GM12878 (cell line): ENCODE measurements at regions of chr1 and their contacts with region 1.

Region 1: GRCh38 chr1:6116137-6116536 is 64.0 kb downstream of the CHD5 start:
- DNase-seq: no peak
- ATAC-seq: no peak
- H3K4me3 ChIP-seq: no peak overlapping the region
- H3K27ac ChIP-seq: no peak overlapping the region
- H3K4me1 ChIP-seq: no peaks in the 10 kb centered on the region
- H3K27me3 ChIP-seq: no peaks in the 10 kb centered on the region
- CTCF ChIP-seq: no peak
- EP300 ChIP-seq: no peak
- POLR2A ChIP-seq: no peak
- RAD21 ChIP-seq: no peak

Region 2: DNA sequence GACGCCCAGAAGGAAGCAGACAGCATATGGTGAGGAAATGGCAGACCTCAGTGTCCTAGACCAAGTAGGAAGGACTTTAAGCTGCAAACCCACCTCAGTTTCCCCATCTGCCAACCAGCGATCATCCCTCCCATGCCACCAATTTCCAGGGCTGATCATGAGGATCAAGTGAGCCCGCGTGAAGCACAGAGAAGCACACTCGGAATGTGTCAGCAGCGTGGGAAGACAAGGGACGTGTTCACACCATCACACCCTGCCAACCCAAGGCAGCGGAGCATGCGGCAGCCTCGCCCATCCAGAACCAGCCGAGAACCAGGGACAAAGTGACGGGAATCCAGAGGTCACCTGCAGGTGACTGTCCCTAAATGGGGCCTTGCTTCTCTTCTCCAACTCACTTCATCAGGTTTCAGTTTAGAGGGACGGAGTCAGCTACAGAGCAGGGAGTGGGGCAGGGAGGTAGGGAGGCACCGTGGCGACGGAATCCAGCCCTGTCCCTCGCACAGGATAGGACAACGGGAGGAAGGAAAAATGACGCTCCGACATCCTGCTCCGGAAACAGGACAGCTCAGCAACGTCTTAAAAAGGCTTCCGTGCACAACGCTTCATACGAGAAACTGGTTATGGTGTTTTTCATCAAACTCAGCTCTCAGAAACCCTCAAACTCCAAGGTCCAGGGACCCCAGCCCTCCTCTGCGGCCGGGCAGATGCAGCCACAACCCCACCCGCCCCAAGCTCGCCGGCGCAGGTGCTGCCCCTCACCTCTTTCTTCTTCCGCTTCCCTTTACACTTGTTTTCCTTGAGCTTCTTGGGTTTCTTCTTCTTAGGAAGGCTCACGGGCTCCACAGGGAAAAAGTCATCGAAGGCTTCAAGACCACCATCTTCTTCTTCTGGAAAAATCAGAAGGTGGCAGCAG is 51.5 kb after region 1 on chr1:
- CTCF ChIA-PET with region 1: no interaction called
- POLR2A ChIA-PET with region 1: no interaction called
- RAD21 ChIA-PET with region 1: no interaction called
- SMC1A ChIA-PET with region 1: no interaction called
- in situ Hi-C with region 1: no loop called
- intact Hi-C with region 1: loop called (anchors 5 kb)
- DNase-seq: no peak
- ATAC-seq: no peak
- H3K4me3 ChIP-seq: no peak overlapping the region
- H3K27ac ChIP-seq: no peak overlapping the region
- H3K4me1 ChIP-seq: no peaks in the 10 kb centered on the region
- H3K27me3 ChIP-seq: no peaks in the 10 kb centered on the region; a peak in 2 of 4 replicates
- CTCF ChIP-seq: no peak
- EP300 ChIP-seq: no peak
- POLR2A ChIP-seq: no peak
- RAD21 ChIP-seq: no peak